Heart right ventricle (tissue), 16 donors: ENCODE measurements at regions of chr9 and their contacts with region 1.

Region 1: DNA sequence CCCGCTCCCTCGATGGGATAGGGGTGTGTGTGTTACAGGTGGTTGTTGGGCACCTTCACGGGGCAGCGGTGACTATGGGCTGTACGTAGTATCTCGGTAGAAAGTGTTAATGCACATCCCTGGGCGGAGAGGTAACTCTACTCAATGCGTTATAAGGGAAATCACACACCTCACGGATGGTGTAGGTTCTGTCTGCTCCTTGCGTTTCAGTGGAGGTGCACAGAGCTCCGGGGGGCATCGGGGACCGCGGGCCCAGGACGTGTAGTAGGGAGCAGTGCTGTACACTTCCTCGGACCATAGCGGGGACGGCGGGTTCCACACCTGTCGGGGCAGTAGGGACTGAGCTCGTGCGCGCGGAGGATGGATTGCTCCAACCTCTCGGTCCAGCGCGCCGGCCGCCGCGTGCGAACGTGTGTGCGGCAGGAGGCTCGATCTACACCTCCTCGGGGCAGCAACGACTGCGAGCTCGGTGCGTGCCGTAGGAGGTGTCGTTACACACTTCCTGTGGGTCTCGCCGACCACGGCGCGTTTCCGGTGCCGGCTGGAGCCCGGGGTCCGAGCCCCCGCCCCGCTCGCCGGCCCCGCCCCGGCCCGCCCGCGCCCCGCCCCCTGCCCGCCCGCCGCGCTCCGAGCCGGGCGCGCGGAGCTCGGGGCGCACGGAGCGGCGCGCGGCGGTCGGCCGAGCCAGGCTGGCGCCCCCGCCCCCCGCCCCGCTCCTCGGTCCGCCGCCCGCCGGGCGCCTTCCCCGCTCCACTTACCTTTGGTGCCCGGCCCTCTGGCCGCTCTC is at the start of gene KIAA1958:
- DNase-seq: peak; percentile 69 to 84
- ATAC-seq: peak; percentile 83 to 94 (median 92)
- H3K4me3 ChIP-seq: peak within 1 kb of the TSS; percentile 50 to 96 (median 82)
- H3K27ac ChIP-seq: peak within 1 kb of the TSS; percentile 47 to 80 (median 74)
- H3K4me1 ChIP-seq: peaks cover 0 to 26% (median 12%) of the 10 kb centered on the region in 9 donors
- H3K27me3 ChIP-seq: peaks cover 0 to 12% (median 0%) of the 10 kb centered on the region in 7 donors
- CTCF ChIP-seq: no peak
- total RNA-seq, gene KIAA1958: 3.0 to 7.7 (median 6.6) TPM

Region 2: DNA sequence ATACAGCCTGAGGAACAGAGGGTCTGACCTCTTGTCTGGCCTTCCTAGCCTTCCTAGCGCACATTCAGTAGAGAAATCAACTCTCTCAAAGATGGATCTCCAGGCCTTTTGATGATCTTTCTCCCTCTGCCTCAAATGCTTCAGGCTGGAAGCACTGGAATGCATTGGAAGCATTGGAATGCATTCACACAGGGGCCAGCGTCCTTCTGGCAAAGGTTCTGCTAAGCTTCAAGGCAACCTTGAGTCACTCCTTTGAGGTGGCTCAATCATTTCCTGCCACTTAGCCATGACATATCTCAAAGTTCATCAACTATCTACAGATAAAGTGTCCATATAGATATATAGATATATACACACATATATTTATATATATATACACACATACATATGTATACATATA is 1199.3 kb before region 1 on chr9:
- intact Hi-C with region 1: no loop called
- DNase-seq: no peak
- ATAC-seq: no peak
- H3K4me3 ChIP-seq: no peak overlapping the region
- H3K27ac ChIP-seq: no peak overlapping the region
- H3K4me1 ChIP-seq: peaks cover 0 to 33% (median 0%) of the 10 kb centered on the region in 9 donors
- H3K27me3 ChIP-seq: no peaks in the 10 kb centered on the region
- CTCF ChIP-seq: no peak

Region 3: GRCh38 chr9:112546149-112547012 is 60.0 kb after region 1 on chr9:
- intact Hi-C with region 1: loop called in 1 of 10 experiments (anchors 10 kb)
- DNase-seq: no peak
- ATAC-seq: no peak
- H3K4me3 ChIP-seq: no peak overlapping the region
- H3K27ac ChIP-seq: peak overlapping the region in 1 of 10 donors; percentile 7
- H3K4me1 ChIP-seq: peaks cover 0 to 25% (median 0%) of the 10 kb centered on the region in 9 donors
- H3K27me3 ChIP-seq: no peaks in the 10 kb centered on the region
- CTCF ChIP-seq: no peak